Activated naive CD8-positive, alpha-beta T cell treated with anti-CD3 and anti-CD28 coated beads, Interleukin-2, amount 10 ng/mL, durations not matched to agents 7 days and 5 days (primary cell): ENCODE measurements at regions of chr15 and their contacts with region 1.

Region 1: DNA sequence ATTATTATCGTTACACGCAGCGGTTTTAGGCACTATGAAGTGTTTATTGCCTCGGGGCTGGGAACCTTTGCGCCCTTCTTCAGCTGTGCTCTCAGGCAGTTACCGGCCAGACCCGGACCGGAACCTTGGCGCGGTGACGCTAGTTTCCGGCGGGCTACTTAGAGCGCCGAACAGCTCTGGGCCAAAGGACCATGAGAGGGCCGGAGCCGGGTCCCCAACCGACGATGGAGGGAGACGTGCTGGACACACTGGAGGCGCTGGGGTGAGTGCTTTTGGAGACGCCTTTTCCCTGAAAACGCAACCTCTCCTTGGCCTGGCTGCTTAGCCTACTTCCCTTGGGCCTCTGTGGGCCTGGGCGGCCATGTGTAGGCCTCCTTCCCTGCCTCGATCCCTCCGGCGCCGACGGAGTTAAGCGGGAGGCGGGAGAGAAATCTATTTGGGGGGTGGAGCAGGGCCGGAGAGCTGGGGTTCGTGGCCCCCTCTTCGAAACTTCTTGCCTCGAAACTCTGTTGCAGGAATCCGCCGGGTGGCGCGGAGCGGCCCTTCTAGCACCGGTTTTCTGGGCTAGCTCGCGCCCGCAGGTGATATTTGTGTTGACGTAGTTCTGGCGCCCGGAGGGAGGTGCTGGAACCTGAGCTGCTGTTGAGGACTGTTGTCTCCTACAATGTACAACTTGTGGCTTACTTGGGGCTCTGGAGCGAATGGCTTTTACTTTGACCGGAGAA is at the start of gene FAM98B:
- DNase-seq: peak; percentile 95
- ATAC-seq: peak; percentile 86
- H3K4me3 Mint-ChIP-seq: peak within 1 kb of the TSS; percentile 89
- H3K27ac Mint-ChIP-seq: peak within 1 kb of the TSS; percentile 91
- H3K4me1 Mint-ChIP-seq: peaks cover 17% of the 10 kb centered on the region
- H3K27me3 Mint-ChIP-seq: peaks cover 22% of the 10 kb centered on the region
- total RNA-seq, gene FAM98B: 24.1 to 34.6 TPM

Region 2: DNA sequence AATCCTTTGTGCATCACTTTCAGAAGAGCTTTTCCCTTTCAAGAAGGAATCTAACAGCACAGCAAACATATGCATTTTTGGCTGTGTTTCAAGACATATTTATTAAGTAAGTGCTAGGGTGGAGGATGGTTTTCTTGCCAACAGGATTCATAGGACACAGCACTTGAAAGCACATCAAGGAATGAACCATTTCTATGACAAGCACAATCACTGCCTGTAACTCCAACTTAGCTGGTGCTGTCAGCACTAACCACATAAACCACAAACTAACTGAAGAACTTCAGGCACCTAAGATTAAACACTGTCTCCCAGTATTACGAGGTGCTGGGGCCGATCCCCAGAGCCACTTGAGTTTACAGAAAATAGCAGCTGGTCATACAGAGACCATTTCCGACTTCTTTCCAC is 236.9 kb before region 1 on chr15:
- POLR2A ChIA-PET with region 1: no interaction called
- DNase-seq: no peak
- ATAC-seq: no peak
- H3K4me3 Mint-ChIP-seq: no peak overlapping the region
- H3K27ac Mint-ChIP-seq: no peak overlapping the region
- H3K4me1 Mint-ChIP-seq: peaks cover 1% of the 10 kb centered on the region
- H3K27me3 Mint-ChIP-seq: peaks cover 10% of the 10 kb centered on the region

Region 3: GRCh38 chr15:38690689-38691332 is 236.7 kb after region 1 on chr15:
- POLR2A ChIA-PET with region 1: interaction called, 19 read pairs
- DNase-seq: peak; percentile 71
- ATAC-seq: no peak
- H3K4me3 Mint-ChIP-seq: no peak overlapping the region
- H3K27ac Mint-ChIP-seq: peak overlapping the region; percentile 95
- H3K4me1 Mint-ChIP-seq: peaks cover 61% of the 10 kb centered on the region
- H3K27me3 Mint-ChIP-seq: no peaks in the 10 kb centered on the region